CD4-positive, alpha-beta T cell (primary cell): ENCODE measurements at regions of chr13 and their contacts with region 1.

Region 1: GRCh38 chr13:71395053-71395452 is 472.0 kb downstream of the DACH1 start:
- DNase-seq: no peak
- ATAC-seq: no peak
- H3K4me3 ChIP-seq: no peak overlapping the region
- H3K4me3 Mint-ChIP-seq: no peak overlapping the region
- H3K27ac ChIP-seq: no peak overlapping the region
- H3K27ac Mint-ChIP-seq: no peak overlapping the region
- H3K4me1 ChIP-seq: no peaks in the 10 kb centered on the region
- H3K4me1 Mint-ChIP-seq: no peaks in the 10 kb centered on the region
- H3K27me3 ChIP-seq: no peaks in the 10 kb centered on the region
- H3K27me3 Mint-ChIP-seq: no peaks in the 10 kb centered on the region
- CTCF ChIP-seq: no peak

Region 2: DNA sequence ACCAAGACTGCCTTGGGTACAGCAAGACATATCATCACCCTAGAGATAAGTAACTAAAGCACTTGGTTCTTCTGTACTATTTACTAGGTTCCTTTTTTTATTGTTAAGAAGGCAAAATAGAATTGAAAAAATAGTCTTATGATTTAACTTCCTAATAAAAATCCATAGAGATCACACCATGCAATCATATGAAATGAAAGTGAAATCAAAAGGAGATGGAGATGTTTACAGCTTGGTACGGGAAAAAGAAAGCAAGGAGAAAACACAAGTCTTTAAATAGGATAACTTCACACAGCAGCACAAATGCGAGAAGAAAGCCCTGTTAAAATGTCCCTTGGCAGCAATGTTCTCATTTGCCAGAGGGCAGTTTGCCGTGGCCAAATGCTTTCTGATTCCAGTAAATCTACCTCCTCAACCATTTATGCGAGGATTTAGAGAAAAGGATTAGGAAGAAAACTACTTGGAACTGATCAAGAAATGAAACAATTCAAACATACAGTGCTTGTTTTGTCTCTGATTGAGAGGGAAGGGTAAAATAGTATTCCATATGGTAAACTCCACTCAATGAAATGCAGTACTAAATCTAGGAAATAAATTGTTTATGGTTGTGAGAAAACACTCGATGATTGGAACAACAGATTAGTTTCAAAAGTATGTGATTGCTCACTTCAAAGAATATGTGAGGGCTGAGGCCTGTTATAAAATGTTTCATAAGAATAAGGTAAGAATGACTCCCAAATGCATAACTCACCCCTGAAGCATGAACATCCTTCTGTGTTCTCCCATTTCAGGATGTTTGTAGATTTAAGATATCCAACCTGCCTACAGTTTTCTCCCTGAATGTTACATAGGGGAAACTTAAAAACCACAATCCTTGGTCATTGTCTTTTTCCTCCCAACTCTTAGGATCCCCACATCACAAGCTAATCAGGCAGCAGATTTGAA is 15.8 kb before region 1 on chr13:
- CTCF ChIA-PET with region 1: no interaction called
- POLR2A ChIA-PET with region 1: no interaction called
- intact Hi-C with region 1: loop called in 1 of 2 experiments (anchors 1 kb)
- DNase-seq: no peak
- ATAC-seq: no peak
- H3K4me3 ChIP-seq: no peak overlapping the region
- H3K4me3 Mint-ChIP-seq: no peak overlapping the region
- H3K27ac ChIP-seq: no peak overlapping the region
- H3K27ac Mint-ChIP-seq: no peak overlapping the region
- H3K4me1 ChIP-seq: no peaks in the 10 kb centered on the region
- H3K4me1 Mint-ChIP-seq: no peaks in the 10 kb centered on the region
- H3K27me3 ChIP-seq: no peaks in the 10 kb centered on the region
- H3K27me3 Mint-ChIP-seq: no peaks in the 10 kb centered on the region
- CTCF ChIP-seq: no peak

Region 3: DNA sequence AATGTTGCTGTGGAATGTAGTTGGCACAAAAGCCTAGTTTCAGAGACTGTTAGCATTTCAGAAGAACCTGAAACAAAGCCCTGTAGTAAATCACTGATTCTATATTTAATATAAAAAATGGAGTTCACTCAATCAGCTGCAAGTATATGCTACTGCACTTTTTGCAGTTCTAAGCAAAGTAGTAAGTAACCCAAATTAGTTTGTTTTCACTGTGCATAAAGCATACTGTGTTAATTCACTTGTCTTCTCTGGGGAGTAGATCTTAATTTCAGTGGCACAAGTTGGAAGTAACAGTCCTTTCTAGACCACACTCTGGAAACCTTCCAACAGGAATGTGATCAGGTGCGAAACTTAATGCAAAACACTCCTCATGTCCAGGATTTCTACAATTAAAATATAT is 332.6 kb after region 1 on chr13:
- CTCF ChIA-PET with region 1: no interaction called
- POLR2A ChIA-PET with region 1: no interaction called
- intact Hi-C with region 1: no loop called
- DNase-seq: no peak
- ATAC-seq: no peak
- H3K4me3 ChIP-seq: no peak overlapping the region
- H3K4me3 Mint-ChIP-seq: no peak overlapping the region
- H3K27ac ChIP-seq: no peak overlapping the region
- H3K27ac Mint-ChIP-seq: no peak overlapping the region
- H3K4me1 ChIP-seq: no peaks in the 10 kb centered on the region
- H3K4me1 Mint-ChIP-seq: no peaks in the 10 kb centered on the region
- H3K27me3 ChIP-seq: no peaks in the 10 kb centered on the region
- H3K27me3 Mint-ChIP-seq: no peaks in the 10 kb centered on the region
- CTCF ChIP-seq: no peak